ENCODE measurements at regions of chr11 and their contacts with region 1.

Region 1: DNA sequence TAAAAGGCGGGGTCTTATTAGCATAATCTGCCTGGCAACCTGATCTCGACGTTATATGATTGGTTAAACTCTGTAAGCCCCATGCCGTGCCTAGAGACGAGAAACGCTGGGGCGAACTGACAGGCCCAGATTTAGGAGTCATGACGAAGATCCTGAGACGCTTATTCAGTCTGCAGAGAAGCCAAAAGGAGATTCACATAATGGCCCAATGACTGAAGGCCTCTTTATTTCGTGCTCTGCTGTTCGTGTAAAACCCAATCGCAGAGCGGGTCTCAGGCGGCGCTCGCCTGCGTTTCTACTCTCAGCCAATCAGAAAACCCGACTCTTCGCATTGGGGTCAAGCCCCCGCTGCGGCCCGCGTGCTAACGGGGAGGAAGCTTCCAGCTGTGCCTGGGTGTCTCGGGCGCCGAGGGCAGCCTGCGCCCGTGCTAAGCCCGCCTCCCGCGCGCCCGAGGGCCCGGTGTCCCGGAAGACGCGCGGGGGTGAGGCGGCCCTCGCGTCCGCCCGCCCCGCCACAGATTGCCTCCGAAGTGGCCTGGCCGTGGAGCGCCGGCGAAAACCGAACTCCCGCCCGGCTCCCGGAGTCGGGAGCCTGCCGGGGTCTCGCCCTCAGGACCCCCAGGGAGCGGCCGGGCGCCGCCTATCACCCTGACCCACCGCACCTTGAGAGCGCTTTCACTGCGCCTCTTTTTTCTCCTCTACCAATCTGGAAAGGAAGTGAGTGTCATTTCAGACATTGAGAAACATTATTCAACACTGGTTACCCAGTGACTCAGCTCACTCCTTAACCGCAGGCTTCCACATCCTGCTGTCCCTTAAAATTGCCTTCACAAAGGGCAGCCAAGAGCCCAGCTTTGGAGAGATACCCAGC is 446 bp upstream of the PRDM10 start:
- DNase-seq: peak; percentile 96
- H3K4me3 ChIP-seq: peak overlapping the region; percentile 82 to 98
- H3K27ac ChIP-seq: peak overlapping the region; percentile 99 to 100
- H3K4me1 ChIP-seq: peaks cover 6% of the 10 kb centered on the region
- H3K27me3 ChIP-seq: no peaks in the 10 kb centered on the region
- CTCF ChIP-seq: no peak
- POLR2A ChIP-seq: peak; percentile 71

Region 2: DNA sequence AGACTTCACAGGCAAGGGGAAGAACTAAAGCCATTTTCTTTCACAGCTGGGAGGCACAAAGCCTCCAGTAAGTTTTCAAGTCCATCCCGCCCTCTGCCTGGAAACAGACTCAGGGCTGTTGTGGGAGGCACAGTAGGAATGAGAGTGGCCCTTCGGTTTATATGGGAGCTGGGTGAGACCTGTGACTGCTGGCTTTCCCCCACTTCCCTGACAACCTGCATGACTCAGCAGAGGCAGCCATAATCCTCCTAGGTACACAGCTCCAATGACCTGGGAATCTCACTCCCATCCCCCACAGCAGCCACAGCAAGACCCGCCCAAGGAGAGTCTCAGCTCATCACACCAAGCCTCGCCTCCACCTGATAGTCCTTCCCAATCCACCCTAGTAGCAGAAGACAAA is 199.5 kb before region 1 on chr11:
- intact Hi-C with region 1: no loop called
- DNase-seq: no peak
- H3K4me3 ChIP-seq: no peak overlapping the region
- H3K27ac ChIP-seq: no peak overlapping the region
- H3K4me1 ChIP-seq: no peaks in the 10 kb centered on the region
- H3K27me3 ChIP-seq: no peaks in the 10 kb centered on the region
- CTCF ChIP-seq: no peak
- POLR2A ChIP-seq: no peak

Region 3: GRCh38 chr11:130069684-130070108 is 66.6 kb after region 1 on chr11 and contains the start of gene APLP2:
- intact Hi-C with region 1: loop called (anchors 5 kb)
- DNase-seq: peak; percentile 99
- H3K4me3 ChIP-seq: peak within 1 kb of the TSS; percentile 84 to 89
- H3K27ac ChIP-seq: peak within 1 kb of the TSS; percentile 93 to 95
- H3K4me1 ChIP-seq: peaks cover 8% of the 10 kb centered on the region
- H3K27me3 ChIP-seq: no peaks in the 10 kb centered on the region
- CTCF ChIP-seq: no peak
- POLR2A ChIP-seq: no peak
- total RNA-seq, gene APLP2: 105 to 130 TPM

Region 4: GRCh38 chr11:130553306-130553705 is 550.2 kb after region 1 on chr11:
- intact Hi-C with region 1: no loop called
- DNase-seq: no peak
- H3K4me3 ChIP-seq: no peak overlapping the region
- H3K27ac ChIP-seq: no peak overlapping the region
- H3K4me1 ChIP-seq: no peaks in the 10 kb centered on the region
- H3K27me3 ChIP-seq: no peaks in the 10 kb centered on the region
- CTCF ChIP-seq: no peak
- POLR2A ChIP-seq: no peak